Breast epithelium (tissue), 4 donors: ENCODE measurements at regions of chr14 and their contacts with region 1.

Region 1: DNA sequence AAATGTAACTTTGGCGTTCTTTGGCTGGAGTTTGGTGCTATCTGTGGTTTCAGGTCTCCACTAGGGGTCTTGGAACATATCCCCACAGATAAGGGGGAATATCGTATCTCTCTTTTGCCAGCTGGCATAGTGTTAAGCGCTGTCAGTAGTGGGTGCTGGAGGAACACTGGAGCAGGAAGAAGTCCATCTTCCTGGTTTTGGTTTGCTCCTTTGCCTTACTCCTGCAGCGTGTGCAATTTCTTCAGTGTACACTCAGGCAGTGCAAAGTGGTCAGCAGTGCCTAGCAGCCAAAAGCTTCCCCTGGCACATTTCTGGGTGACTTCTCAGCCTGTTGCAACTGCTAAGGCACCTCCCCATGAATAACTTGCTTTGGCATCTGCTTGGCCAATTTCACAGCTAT is 11.7 kb upstream of the RIPK3 start:
- DNase-seq: no peak
- H3K4me3 ChIP-seq: no peak overlapping the region
- H3K27ac ChIP-seq: no peak overlapping the region
- H3K4me1 ChIP-seq: no peaks in the 10 kb centered on the region
- H3K27me3 ChIP-seq: no peaks in the 10 kb centered on the region
- CTCF ChIP-seq: no peak
- POLR2A ChIP-seq: no peak

Region 2: GRCh38 chr14:23562268-23563203 is 789.0 kb before region 1 on chr14:
- intact Hi-C with region 1: loop called (anchors 5 kb)
- DNase-seq: no peak
- H3K4me3 ChIP-seq: no peak overlapping the region
- H3K27ac ChIP-seq: peak overlapping the region; percentile 63 to 76
- H3K4me1 ChIP-seq: peaks cover 0 to 4% of the 10 kb centered on the region in 2 donors
- H3K27me3 ChIP-seq: no peaks in the 10 kb centered on the region
- CTCF ChIP-seq: peak; percentile 82 to 90 (median 86)
- POLR2A ChIP-seq: no peak

Region 3: DNA sequence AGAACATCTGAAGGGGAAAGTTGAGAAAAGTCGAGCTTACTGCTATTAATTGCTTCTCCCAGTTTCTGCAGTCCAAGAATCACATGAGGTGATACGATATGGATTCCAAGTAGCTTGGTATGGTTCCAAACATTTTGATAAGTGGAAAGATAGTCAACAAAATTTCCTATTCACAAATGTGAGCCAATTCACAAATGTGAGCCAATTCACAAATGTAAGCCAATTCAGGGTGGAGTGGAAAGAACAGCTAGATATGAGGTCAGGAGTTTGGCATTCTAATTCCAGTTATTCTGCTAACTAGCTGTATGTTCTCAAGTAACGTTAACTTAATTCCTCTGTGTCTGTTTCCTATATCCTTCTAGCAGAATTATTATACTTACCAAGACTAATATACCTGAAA is 435.5 kb before region 1 on chr14:
- intact Hi-C with region 1: no loop called
- DNase-seq: no peak
- H3K4me3 ChIP-seq: no peak overlapping the region
- H3K27ac ChIP-seq: peak overlapping the region in 1 of 2 donors; percentile 10
- H3K4me1 ChIP-seq: no peaks in the 10 kb centered on the region
- H3K27me3 ChIP-seq: no peaks in the 10 kb centered on the region
- CTCF ChIP-seq: no peak
- POLR2A ChIP-seq: no peak

Region 4: GRCh38 chr14:24398653-24399446 is 47.3 kb after region 1 on chr14 and contains the start of gene NYNRIN:
- intact Hi-C with region 1: loop called (anchors 5 kb)
- DNase-seq: no peak
- H3K4me3 ChIP-seq: peak within 1 kb of the TSS; percentile 60 to 95 (median 72)
- H3K27ac ChIP-seq: peak within 1 kb of the TSS; percentile 69 to 91
- H3K4me1 ChIP-seq: peaks cover 3 to 11% of the 10 kb centered on the region in 2 donors
- H3K27me3 ChIP-seq: no peaks in the 10 kb centered on the region
- CTCF ChIP-seq: no peak
- POLR2A ChIP-seq: no peak
- total RNA-seq, gene NYNRIN: 6.4 to 8.2 (median 7.7) TPM

Region 5: DNA sequence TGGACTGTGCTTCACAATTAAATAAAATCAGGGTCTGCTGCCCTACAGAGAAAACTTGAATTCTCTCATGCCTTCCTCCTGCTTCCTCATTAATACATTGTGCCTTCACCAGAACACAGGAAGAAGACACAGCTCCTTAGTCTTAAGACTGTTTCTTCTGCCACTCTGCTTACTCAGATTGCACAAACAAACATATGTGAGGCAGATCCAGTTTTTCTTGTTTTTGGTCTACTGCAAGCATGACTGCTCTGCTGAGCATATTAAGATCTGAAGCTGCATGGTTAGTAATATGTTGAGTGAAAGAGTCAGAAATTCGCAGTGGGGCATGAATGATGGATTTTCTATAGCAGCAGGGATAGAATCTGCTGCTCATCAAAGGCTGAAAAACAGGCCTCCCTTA is 1019.5 kb after region 1 on chr14:
- intact Hi-C with region 1: no loop called
- DNase-seq: no peak
- H3K4me3 ChIP-seq: no peak overlapping the region
- H3K27ac ChIP-seq: peak overlapping the region in 1 of 2 donors; percentile 52
- H3K4me1 ChIP-seq: no peaks in the 10 kb centered on the region
- H3K27me3 ChIP-seq: no peaks in the 10 kb centered on the region
- CTCF ChIP-seq: no peak
- POLR2A ChIP-seq: no peak